ENCODE measurements at regions of chr7 and their contacts with region 1.

Region 1: GRCh38 chr7:101217388-101218235 is at the starts of genes PLOD3 and ZNHIT1:
- DNase-seq: peak; percentile 86 to 97 (median 94)
- ATAC-seq: peak; percentile 85
- H3K4me3 ChIP-seq: peak within 1 kb of the TSS; percentile 70
- H3K4me3 Mint-ChIP-seq: peak within 1 kb of the TSS; percentile 89 to 97 (median 96)
- H3K27ac ChIP-seq: peak within 1 kb of the TSS; percentile 87
- H3K27ac Mint-ChIP-seq: peak within 1 kb of the TSS; percentile 88 to 96 (median 93)
- H3K4me1 ChIP-seq: peaks cover 15% of the 10 kb centered on the region in 2 donors
- H3K4me1 Mint-ChIP-seq: peaks cover 27 to 54% (median 46%) of the 10 kb centered on the region in 7 donors
- H3K27me3 ChIP-seq: no peaks in the 10 kb centered on the region
- H3K27me3 Mint-ChIP-seq: no peaks in the 10 kb centered on the region
- total RNA-seq, gene PLOD3: 18.5 to 88.4 (median 44.2) TPM
- total RNA-seq, gene ZNHIT1: 32.1 to 72.1 (median 37.6) TPM

Region 2: DNA sequence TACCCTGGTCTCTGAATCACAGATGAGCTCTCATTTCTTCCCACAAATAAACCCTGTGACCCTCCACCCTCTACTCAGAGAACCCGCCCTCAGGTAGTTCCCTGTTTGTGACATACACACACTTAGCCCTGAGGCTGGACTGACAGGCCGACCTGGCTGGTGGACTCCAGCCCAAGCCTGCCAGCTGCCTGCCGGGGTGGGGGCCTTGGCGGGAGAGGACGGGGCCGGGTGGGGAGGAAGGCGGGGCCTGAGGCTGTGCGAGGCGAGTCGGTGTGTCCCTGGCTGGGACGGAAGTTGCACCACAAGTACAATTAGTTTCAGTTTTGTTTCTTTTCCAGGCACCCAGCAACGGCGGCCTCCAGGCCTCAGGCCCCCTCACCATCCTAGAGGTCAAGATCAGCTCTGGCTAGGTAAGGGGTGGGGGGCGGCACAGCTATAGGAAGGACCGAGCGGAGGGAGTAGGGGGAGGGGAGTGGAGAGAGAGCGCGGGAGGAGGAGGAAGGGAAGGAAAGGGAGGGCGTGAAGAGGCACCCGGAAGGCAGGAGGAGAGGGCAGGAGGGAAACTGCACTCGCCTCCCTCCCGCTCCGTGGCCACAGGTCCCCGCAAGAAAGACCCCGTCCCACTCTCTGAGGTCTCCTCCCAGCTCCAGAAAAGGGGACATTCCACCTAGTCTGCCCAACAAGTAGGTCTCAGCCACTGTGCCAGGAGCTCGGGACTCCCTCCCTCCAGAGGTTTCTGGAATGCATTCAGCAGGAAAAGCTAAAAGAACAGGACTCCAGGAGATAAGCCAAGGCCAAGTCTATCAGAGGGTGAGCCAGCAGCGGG is 132.2 kb before region 1 on chr7 and contains the start of gene TRIM56:
- CTCF ChIA-PET with region 1: interaction called, 3 read pairs
- POLR2A ChIA-PET with region 1: interaction called, 4 read pairs
- intact Hi-C with region 1: loop called in 1 of 2 experiments (anchors 1 kb)
- DNase-seq: peak; percentile 53 to 77 (median 74)
- ATAC-seq: peak; percentile 94
- H3K4me3 ChIP-seq: peak within 1 kb of the TSS; percentile 100
- H3K4me3 Mint-ChIP-seq: peak within 1 kb of the TSS; percentile 91 to 100 (median 98)
- H3K27ac ChIP-seq: peak within 1 kb of the TSS; percentile 97
- H3K27ac Mint-ChIP-seq: peak within 1 kb of the TSS; percentile 93 to 100 (median 99)
- H3K4me1 ChIP-seq: peaks cover 10 to 15% of the 10 kb centered on the region in 2 donors
- H3K4me1 Mint-ChIP-seq: peaks cover 14 to 43% (median 28%) of the 10 kb centered on the region in 7 donors
- H3K27me3 ChIP-seq: no peaks in the 10 kb centered on the region
- H3K27me3 Mint-ChIP-seq: peaks cover 0 to 6% (median 0%) of the 10 kb centered on the region in 5 donors
- total RNA-seq, gene TRIM56: 49.6 to 72.3 (median 68.0) TPM

Region 3: DNA sequence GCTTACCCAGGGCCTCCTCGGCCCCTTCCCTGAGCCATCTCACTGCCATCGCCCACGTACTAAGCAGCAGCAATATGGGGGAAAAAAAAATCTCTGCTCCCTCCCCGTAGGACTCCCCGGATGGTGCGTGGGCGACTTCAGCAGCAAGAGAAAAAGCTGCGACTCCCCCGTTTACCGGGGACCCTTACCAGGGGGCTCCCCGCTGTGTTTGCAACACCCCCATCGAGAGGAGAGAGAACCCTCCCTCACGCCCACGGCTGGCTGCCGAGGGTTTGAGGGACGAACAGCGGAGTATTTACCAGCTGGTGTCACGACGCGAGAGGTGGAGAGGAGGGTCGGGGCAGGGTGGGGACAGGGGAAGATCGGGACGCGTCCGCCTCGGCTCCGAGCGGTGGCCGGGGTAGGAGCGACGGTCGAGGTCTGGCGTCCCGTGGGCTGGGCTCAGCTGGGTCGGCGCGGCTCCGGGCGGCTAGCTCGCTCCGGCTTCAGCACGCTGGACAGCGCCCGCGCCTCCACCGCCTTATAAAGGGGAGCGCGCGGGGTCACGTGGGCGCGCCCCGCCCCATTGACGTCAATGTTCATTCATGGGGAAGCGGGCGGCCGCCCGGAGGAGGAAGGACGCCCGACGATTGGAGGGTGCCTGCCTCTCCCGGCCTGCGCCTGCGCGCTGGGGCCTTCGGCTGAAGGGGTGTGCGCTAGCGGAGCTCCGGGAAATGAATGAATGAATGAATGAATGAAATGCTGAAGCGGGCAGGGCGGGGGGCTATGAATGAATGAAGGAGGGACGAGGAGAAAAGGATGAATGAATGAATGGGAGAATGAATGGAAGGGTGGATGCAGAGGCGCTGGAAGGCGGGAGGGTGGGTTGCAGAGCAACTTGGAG is 52.3 kb before region 1 on chr7 and contains the start of gene VGF:
- CTCF ChIA-PET with region 1: no interaction called
- POLR2A ChIA-PET with region 1: interaction called, 6 read pairs
- intact Hi-C with region 1: loop called (anchors 1 kb)
- DNase-seq: peak; percentile 84 to 97 (median 90)
- ATAC-seq: peak; percentile 93
- H3K4me3 ChIP-seq: peak within 1 kb of the TSS; percentile 10
- H3K4me3 Mint-ChIP-seq: peak within 1 kb of the TSS; percentile 58 to 92 (median 77)
- H3K27ac ChIP-seq: no peak within 1 kb of the TSS
- H3K27ac Mint-ChIP-seq: peak within 1 kb of the TSS; percentile 4 to 87 (median 73)
- H3K4me1 ChIP-seq: peaks cover 34 to 40% of the 10 kb centered on the region in 2 donors
- H3K4me1 Mint-ChIP-seq: peaks cover 39 to 56% (median 46%) of the 10 kb centered on the region in 7 donors
- H3K27me3 ChIP-seq: peaks cover 20 to 46% of the 10 kb centered on the region in 2 donors
- H3K27me3 Mint-ChIP-seq: peaks cover 55 to 70% (median 62%) of the 10 kb centered on the region in 5 donors
- total RNA-seq, gene VGF: 0.19 TPM in 1 of 5 experiments, not detected in the others

Region 4: DNA sequence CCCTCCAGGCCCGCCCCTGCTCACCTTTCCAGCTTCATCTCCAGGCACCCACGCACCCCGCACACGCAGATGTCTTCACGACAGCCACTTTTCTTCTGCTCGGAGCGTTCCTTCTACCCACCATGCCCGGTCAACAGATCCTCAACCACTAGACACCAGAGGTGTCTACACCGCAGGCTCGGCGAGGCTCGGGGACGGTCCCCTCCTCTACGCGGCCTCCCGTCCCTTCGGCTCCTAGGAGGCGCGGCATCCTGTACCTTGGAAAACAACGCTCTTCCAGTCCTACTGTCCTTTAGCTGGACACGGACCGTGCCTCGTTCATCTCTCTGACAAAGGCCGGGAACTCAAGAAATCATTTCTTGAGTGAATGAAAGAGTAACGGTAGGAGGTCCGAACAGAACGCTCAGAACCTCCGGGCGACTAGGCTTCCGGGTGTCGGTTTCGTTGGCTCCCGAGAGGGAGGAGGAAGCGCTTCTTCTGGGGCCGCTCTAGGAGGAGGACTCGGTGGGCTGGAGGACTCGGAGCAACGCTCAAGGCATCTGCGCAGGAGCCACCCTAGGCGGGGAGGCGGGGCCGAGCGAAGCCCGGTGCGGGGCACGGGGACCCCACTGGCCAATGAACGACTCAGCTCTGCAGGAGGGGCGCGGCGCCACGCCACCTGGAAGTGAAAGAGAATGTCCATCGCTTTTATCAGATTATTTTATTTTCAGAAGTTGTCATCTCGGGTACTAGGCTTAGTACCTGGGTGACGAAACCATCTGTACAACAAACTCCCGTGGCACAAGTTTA is 34.5 kb after region 1 on chr7:
- CTCF ChIA-PET with region 1: no interaction called
- POLR2A ChIA-PET with region 1: interaction called, 15 read pairs
- intact Hi-C with region 1: loop called (anchors 1 kb)
- DNase-seq: peak; percentile 95 to 98 (median 97)
- ATAC-seq: peak; percentile 100
- H3K4me3 ChIP-seq: peak overlapping the region; percentile 76
- H3K4me3 Mint-ChIP-seq: peak overlapping the region; percentile 94 to 100 (median 99)
- H3K27ac ChIP-seq: peak overlapping the region; percentile 87
- H3K27ac Mint-ChIP-seq: peak overlapping the region; percentile 90 to 99 (median 97)
- H3K4me1 ChIP-seq: peaks cover 13 to 16% of the 10 kb centered on the region in 2 donors
- H3K4me1 Mint-ChIP-seq: peaks cover 28 to 39% (median 32%) of the 10 kb centered on the region in 7 donors
- H3K27me3 ChIP-seq: no peaks in the 10 kb centered on the region
- H3K27me3 Mint-ChIP-seq: peaks cover 0 to 4% (median 0%) of the 10 kb centered on the region in 5 donors

Region 5: DNA sequence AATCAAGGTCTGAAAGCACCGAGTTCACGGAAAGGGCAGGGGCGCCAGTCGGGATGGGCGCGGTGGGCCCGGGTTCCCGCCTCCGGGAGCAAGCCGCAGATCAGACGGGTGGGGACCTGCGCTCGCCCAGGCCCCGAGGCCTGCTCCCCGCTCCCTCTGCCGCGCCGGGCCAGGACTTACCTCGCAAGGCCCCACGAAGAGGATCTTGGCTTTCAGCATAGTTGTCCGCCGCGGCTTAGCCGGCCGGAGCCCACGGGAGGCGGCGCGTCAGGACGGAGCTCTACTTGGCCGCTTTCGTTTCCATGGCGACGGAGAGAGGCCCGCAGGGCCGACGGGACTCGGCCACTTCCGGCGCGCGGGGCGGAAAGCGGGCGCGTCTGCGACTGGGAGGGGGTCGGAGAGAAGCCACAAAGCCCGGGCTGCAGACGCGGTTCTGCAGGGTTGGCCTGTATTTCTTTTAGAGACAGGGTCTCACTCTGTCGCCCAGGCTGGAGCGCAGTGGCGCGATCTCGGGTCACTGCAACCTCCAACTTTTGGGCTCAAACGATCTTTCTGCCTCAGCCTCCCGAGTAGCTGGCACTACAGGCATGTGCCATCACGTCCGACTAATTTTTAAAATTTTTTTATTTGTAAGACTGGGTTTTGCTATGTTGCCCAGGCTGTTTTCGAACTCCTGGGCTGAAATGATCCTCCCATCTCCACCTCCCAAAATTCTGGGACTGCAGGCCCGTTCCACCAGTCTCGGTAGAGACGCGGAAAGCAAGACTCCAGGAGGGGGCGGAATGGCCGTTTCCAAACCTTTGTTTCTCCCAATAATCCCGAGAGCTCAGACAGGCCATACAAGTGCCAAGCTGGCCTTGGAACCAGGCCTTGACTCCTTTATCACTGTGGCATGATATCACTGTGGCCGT is 104.1 kb after region 1 on chr7 and contains the start of gene IFT22:
- CTCF ChIA-PET with region 1: no interaction called
- POLR2A ChIA-PET with region 1: interaction called, 3 read pairs
- intact Hi-C with region 1: loop called (anchors 5 kb)
- DNase-seq: peak; percentile 68 to 87 (median 79)
- ATAC-seq: peak; percentile 95
- H3K4me3 ChIP-seq: peak within 1 kb of the TSS; percentile 74
- H3K4me3 Mint-ChIP-seq: peak within 1 kb of the TSS; percentile 86 to 94 (median 91)
- H3K27ac ChIP-seq: peak within 1 kb of the TSS; percentile 70
- H3K27ac Mint-ChIP-seq: peak within 1 kb of the TSS; percentile 82 to 94 (median 90)
- H3K4me1 ChIP-seq: peaks cover 7 to 12% of the 10 kb centered on the region in 2 donors
- H3K4me1 Mint-ChIP-seq: peaks cover 0 to 19% (median 9%) of the 10 kb centered on the region in 7 donors
- H3K27me3 ChIP-seq: no peaks in the 10 kb centered on the region
- H3K27me3 Mint-ChIP-seq: peaks cover 0 to 7% (median 0%) of the 10 kb centered on the region in 5 donors
- total RNA-seq, gene IFT22: 3.7 to 7.4 (median 4.8) TPM

Region 6: DNA sequence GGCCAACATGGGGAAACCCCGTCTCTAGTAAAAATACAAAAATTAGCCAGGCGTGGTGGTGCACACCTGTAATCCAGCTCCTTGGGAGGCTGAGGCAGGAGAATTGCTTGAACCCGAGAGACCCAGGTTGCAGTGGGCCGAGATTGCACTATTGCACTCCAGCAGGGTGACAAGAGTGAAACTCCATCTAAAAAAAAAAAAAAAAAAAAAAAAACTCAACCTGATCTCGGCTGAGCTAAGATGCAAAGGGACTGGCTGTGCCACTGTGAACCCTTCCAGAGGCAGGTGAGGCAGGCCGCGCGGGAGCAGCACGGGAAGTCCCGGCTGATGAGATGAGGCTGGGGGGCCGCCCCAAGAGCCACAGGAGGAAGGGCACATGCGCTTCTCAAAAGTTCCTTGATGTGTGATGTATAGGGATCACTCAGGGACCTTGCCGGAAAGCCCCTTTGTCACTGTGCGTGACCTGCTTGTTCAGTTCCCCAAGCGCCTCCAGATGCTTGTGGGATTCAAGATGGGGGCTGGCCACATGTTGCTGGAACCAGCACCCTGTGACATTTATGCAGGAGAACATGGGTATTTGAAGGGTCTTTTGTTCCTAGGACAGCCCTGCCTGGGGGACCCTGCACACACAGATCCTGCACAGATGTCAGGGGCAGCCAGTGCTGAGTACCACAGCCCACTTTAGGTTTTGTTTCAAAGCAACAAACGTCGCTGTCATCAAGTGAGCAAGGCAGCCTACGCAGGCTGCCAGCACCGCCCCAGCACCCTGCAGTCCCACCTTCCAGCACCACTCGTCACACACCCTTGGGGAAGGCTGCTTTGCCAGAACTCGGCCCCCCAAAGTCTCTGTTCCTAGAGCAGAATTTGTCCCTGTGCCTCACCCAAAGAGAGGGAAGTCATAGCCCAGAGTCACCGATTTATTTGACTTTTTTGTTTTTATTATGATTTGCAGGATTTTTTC is 994.3 kb after region 1 on chr7:
- CTCF ChIA-PET with region 1: no interaction called
- POLR2A ChIA-PET with region 1: no interaction called
- intact Hi-C with region 1: no loop called
- DNase-seq: no peak
- ATAC-seq: no peak
- H3K4me3 ChIP-seq: no peak overlapping the region
- H3K4me3 Mint-ChIP-seq: no peak overlapping the region
- H3K27ac ChIP-seq: no peak overlapping the region
- H3K27ac Mint-ChIP-seq: no peak overlapping the region
- H3K4me1 ChIP-seq: no peaks in the 10 kb centered on the region
- H3K4me1 Mint-ChIP-seq: no peaks in the 10 kb centered on the region
- H3K27me3 ChIP-seq: no peaks in the 10 kb centered on the region
- H3K27me3 Mint-ChIP-seq: no peaks in the 10 kb centered on the region

Measured in naive thymus-derived CD4-positive, alpha-beta T cell (primary cell).